A673 (cell line): ENCODE measurements at regions of chr18 and their contacts with region 1.

Region 1: DNA sequence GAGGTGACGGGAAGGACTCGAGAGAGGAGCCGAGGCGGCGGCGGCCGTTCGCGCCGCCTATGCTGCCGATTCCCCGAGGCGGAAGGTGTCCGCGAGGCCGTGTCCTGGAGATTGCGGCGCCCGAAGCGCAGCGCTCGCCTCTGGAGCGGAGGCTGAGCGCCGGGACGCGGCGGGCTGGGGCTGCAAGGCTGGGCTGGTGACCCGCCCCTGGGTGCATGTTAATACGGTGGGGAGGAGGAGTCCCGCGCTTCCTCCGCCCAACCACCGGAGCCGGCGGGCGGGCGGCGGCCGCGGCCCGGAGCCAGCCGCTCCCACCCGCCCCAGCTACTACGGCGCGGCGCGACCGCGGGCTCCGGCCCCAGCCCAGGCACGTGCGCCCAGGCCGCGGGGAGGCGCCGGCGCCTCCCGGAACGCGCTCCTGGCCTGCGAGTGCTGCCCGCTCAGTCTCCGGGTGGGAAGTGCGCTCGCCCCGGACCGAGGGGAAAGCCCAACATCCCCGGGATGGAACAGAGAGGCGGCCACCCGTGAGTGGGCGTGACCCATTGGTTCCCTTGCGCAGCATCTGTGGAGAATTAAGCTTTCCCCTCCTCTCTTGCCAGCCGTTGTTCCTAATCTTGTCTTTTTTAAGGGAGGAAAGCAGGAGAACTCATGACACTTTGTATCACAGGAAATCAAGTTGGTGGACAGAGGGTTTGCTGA is at the start of gene DLGAP1:
- DNase-seq: peak; percentile 80
- H3K4me3 ChIP-seq: peak within 1 kb of the TSS; percentile 76
- H3K27ac ChIP-seq: peak within 1 kb of the TSS; percentile 64
- H3K4me1 ChIP-seq: peaks cover 31% of the 10 kb centered on the region
- H3K27me3 ChIP-seq: no peaks in the 10 kb centered on the region
- CTCF ChIP-seq: no peak
- total RNA-seq, gene DLGAP1: 131 and 135 TPM in 2 replicates

Region 2: DNA sequence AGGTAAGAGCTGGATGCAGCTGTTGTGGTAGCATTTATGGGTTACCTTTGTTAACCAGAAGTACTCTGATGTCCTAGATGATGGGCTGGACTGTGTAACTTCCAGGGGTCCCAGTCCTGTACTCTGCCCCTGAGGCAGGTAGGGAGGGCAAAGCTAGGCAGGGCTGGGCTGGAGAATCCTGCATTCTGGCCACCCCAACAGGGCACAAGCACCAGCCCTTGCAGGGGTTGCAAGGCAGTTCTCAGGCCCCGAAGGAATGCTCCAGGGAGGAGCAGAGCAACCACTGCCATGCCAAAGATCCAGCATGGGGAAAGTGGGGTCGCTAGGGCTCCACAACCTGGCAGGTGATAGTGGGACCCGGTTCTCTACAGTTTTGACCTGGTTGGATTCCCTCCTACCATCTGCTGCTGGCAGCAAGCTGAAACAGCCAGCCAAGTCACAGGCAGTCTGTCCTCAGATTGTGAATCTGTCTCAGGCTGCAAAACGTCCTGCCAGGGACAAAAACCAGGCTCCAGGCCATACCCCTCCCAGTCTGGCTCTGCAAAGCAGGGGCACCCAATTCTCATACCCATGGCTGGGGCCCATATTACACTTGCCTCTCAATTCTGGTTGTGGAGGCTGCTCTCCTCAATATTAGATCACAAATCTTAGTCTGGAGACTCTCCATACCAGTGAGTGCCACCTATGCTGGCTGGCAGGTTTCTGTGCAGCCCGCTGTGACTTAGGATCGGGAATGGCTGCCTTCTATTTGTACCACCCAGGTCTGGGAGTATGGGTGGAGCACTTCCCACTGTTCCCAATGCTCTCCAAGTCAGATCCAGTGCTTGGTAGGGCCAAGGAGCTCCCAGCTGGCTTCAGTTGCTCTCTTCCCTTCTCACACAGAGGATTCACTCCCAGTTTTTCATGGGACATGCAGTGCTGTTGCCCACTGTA is 1738.6 kb before region 1 on chr18:
- CTCF ChIA-PET with region 1: no interaction called
- POLR2A ChIA-PET with region 1: no interaction called
- intact Hi-C with region 1: no loop called
- DNase-seq: no peak
- H3K4me3 ChIP-seq: no peak overlapping the region
- H3K27ac ChIP-seq: no peak overlapping the region
- H3K4me1 ChIP-seq: no peaks in the 10 kb centered on the region
- H3K27me3 ChIP-seq: no peaks in the 10 kb centered on the region
- CTCF ChIP-seq: no peak

Region 3: GRCh38 chr18:4106407-4107033 is 348.7 kb before region 1 on chr18:
- CTCF ChIA-PET with region 1: no interaction called
- POLR2A ChIA-PET with region 1: no interaction called
- intact Hi-C with region 1: loop called (anchors 10 kb)
- DNase-seq: peak; percentile 87
- H3K4me3 ChIP-seq: no peak overlapping the region
- H3K27ac ChIP-seq: no peak overlapping the region
- H3K4me1 ChIP-seq: peaks cover 10% of the 10 kb centered on the region
- H3K27me3 ChIP-seq: no peaks in the 10 kb centered on the region
- CTCF ChIP-seq: peak; percentile 92

Region 4: GRCh38 chr18:4203568-4204437 is 251.5 kb before region 1 on chr18:
- CTCF ChIA-PET with region 1: no interaction called
- POLR2A ChIA-PET with region 1: no interaction called
- intact Hi-C with region 1: loop called (anchors 10 kb)
- DNase-seq: peak; percentile 88
- H3K4me3 ChIP-seq: no peak overlapping the region
- H3K27ac ChIP-seq: peak overlapping the region; percentile 10
- H3K4me1 ChIP-seq: peaks cover 30% of the 10 kb centered on the region
- H3K27me3 ChIP-seq: no peaks in the 10 kb centered on the region
- CTCF ChIP-seq: no peak

Region 5: DNA sequence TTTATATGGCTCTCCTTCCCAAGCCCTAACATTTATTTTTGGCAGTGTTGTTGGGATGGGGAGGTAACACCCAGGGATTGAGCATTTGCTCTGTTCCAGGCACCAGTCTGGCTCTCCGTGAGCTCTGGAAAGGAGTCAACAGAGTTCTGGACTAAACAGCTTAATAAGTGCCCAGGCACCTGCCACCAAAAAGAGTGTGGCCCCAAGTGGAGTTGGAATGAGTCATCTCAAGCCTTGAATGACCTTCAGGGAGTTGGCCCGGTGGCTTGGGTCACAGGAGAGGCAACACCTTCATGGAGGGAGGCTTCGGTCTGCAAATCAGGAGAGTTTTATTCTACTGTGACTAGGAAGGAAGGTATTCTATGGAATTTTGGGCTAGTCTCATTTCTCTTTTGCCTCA is 203.4 kb before region 1 on chr18:
- CTCF ChIA-PET with region 1: no interaction called
- POLR2A ChIA-PET with region 1: no interaction called
- intact Hi-C with region 1: loop called (anchors 10 kb)
- DNase-seq: no peak
- H3K4me3 ChIP-seq: no peak overlapping the region
- H3K27ac ChIP-seq: no peak overlapping the region
- H3K4me1 ChIP-seq: peaks cover 39% of the 10 kb centered on the region
- H3K27me3 ChIP-seq: no peaks in the 10 kb centered on the region
- CTCF ChIP-seq: no peak

Region 6: DNA sequence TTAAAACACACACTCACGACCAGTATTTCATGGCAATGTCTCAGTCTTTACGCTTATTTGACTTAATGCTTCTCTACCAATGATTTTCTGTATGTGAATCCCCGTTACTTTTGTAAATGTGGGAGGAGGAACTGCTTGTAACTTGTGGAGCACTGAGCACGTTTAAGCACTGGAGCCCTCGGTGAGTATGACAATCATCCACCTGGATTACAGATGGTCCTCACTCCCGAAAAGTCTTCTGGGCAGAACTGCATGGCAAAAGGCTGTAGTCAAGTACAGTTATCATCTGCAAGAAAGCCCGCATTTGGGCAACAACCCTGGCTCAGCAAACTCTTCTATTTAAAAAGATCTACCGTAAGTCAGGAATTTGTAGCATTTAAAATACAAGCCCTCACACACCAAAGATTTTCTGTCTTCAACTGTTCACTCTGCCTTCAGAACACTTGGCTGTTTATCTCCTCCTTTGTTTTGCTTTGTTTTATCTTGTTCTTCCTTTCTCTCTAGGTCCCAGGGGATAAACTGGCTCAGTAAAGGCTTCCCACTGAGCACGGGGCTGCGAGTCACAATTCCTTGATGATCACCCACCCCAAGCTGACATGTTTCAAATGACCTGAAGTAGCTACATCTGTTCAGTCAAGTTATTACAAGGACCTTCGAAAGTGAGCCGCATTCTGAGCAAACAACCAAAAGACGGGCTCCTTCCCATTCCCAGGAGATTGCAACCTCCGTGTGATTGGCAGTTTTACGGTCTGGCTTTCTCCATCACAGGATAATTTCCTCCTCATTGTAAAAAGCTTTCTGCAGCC is 102.3 kb before region 1 on chr18:
- CTCF ChIA-PET with region 1: no interaction called
- POLR2A ChIA-PET with region 1: no interaction called
- intact Hi-C with region 1: loop called (anchors 5 kb)
- DNase-seq: peak; percentile 92
- H3K4me3 ChIP-seq: peak overlapping the region; percentile 28
- H3K27ac ChIP-seq: peak overlapping the region; percentile 50
- H3K4me1 ChIP-seq: peaks cover 15% of the 10 kb centered on the region
- H3K27me3 ChIP-seq: no peaks in the 10 kb centered on the region
- CTCF ChIP-seq: no peak

Region 7: GRCh38 chr18:4750393-4751346 is 295.4 kb after region 1 on chr18:
- CTCF ChIA-PET with region 1: no interaction called
- POLR2A ChIA-PET with region 1: no interaction called
- intact Hi-C with region 1: no loop called
- DNase-seq: no peak
- H3K4me3 ChIP-seq: no peak overlapping the region
- H3K27ac ChIP-seq: no peak overlapping the region
- H3K4me1 ChIP-seq: no peaks in the 10 kb centered on the region
- H3K27me3 ChIP-seq: peaks cover 6% of the 10 kb centered on the region
- CTCF ChIP-seq: no peak

Region 8: GRCh38 chr18:5021558-5021957 is 566.3 kb after region 1 on chr18:
- CTCF ChIA-PET with region 1: no interaction called
- POLR2A ChIA-PET with region 1: no interaction called
- intact Hi-C with region 1: loop called (anchors 2 kb)
- DNase-seq: no peak
- H3K4me3 ChIP-seq: no peak overlapping the region
- H3K27ac ChIP-seq: no peak overlapping the region
- H3K4me1 ChIP-seq: no peaks in the 10 kb centered on the region
- H3K27me3 ChIP-seq: no peaks in the 10 kb centered on the region
- CTCF ChIP-seq: no peak

Region 9: DNA sequence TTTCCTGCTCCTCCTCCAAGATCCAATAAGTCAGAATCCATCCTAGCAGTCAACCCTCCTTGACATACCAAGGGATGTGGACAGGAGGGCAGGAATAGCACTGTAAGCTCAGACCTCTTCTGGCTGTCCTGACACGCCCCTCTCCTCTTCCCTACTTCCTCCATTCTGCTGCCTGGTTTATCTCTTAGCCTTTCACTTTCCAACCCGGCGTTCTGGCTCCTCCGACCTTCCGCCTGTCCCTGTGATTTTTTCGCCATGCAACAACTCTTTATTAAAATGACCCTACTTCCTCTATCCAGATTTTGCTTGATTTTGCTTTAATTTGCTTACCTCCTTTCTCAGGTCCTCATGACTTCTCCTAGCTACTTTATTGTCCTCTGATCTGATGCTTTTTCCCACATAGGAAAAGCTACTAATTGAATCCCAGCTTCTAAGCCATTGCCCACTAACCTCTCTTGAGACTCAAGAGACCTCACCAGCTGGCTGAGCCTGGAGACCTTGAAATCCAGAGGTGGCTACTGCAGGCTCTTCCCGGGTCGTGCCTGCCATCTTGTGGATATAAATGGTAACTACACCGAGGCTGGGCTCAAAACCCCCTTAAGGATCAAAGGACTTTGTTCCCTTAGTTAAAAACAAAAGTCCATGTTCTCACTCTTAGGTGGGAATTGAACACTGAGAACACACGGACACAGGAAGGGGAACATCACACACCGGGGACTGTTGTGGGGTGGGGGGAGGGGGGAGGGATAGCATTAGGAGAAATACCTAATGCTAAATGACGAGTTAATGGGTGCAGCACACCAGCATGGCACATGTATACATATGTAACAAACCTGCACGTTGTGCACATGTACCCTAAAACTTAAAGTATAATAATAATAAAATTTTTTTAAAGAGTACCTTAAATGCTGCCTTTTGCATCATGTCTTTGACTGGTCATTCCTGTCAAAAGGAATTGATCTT is 602.4 kb after region 1 on chr18:
- CTCF ChIA-PET with region 1: no interaction called
- POLR2A ChIA-PET with region 1: no interaction called
- intact Hi-C with region 1: loop called (anchors 10 kb)
- DNase-seq: peak; percentile 85
- H3K4me3 ChIP-seq: no peak overlapping the region
- H3K27ac ChIP-seq: no peak overlapping the region
- H3K4me1 ChIP-seq: peaks cover 20% of the 10 kb centered on the region
- H3K27me3 ChIP-seq: no peaks in the 10 kb centered on the region
- CTCF ChIP-seq: peak; percentile 83